Endothelial cell of umbilical vein (primary cell): ENCODE measurements at regions of chr17 and their contacts with region 1.

Region 1: DNA sequence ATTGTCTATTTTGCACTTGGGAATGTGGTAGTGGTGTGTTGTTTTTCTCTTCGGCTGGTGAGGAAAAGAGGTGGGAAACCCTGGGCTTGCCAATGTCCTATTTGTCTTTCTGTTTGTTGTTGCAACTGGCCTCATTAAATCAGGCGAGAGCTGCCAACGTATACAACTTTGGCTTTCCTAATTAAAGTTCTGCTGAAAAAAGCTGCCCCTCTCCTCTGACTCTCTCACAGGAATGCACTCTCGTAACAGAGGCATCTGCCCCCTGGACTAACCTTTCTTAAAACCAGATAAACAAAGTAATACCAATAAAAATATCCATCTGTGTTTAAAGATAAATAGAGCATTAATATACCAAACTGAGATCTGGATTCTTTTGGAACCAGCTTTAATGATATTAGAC is 7.8 kb downstream of the CDRT15 start:
- DNase-seq: no peak
- H3K4me3 ChIP-seq: no peak overlapping the region
- H3K27ac ChIP-seq: no peak overlapping the region
- H3K4me1 ChIP-seq: no peaks in the 10 kb centered on the region
- H3K27me3 ChIP-seq: no peaks in the 10 kb centered on the region
- CTCF ChIP-seq: no peak
- POLR2A ChIP-seq: no peak

Region 2: GRCh38 chr17:14038206-14038605 is 190.7 kb before region 1 on chr17:
- CTCF ChIA-PET with region 1: no interaction called
- POLR2A ChIA-PET with region 1: no interaction called
- dilution Hi-C with region 1: no loop called
- intact Hi-C with region 1: loop called (anchors 10 kb)
- DNase-seq: no peak
- H3K4me3 ChIP-seq: no peak overlapping the region
- H3K27ac ChIP-seq: no peak overlapping the region
- H3K4me1 ChIP-seq: no peaks in the 10 kb centered on the region
- H3K27me3 ChIP-seq: no peaks in the 10 kb centered on the region
- CTCF ChIP-seq: no peak
- POLR2A ChIP-seq: no peak